HCT116 (cell line): ENCODE measurements at regions of chr2 and their contacts with region 1.

Region 1: DNA sequence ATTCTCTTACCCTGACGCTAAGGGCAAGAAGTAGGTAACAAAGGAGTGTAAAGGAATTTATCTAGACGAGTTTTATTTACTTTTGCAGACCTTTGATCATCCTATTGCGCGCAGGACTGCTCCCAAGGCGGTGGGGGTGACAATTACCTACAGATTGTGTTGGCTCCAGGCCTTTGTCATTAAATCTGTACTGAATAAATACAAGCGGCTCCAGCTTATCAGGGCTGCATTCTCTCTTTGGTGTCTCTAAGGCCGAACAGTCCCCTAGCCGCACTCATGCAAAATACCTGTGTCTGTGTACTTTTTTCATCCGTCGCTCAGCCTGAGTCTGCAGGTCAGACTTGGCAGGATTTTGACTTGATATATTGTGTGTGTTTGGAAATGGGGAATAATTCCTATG is 57.9 kb upstream of the DYSF start:
- DNase-seq: no peak
- ATAC-seq: no peak
- H3K4me3 ChIP-seq: no peak overlapping the region
- H3K27ac ChIP-seq: no peak overlapping the region
- H3K4me1 ChIP-seq: no peaks in the 10 kb centered on the region
- H3K27me3 ChIP-seq: no peaks in the 10 kb centered on the region
- CTCF ChIP-seq: no peak
- POLR2A ChIP-seq: no peak
- RAD21 ChIP-seq: no peak

Region 2: DNA sequence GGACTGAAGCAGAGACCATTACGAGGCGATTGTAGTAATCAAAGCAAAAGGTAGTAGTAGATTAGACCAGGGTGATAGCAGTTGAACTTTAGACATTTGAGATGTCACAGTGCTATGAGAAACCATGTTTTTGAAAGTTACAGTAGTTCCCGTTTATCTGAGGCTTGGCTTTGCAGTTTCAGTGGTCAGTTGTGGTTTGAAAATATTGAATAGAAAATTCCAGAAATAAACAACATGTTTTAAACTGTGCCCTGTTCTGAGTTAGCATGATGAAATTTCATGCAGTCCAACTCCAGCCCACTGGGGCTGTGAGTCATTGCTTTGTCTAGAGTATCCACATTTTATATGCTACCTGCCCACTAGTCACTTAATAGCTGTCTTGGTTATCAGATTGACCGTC is 16.4 kb before region 1 on chr2:
- CTCF ChIA-PET with region 1: no interaction called
- POLR2A ChIA-PET with region 1: no interaction called
- RAD21 ChIA-PET with region 1: no interaction called
- intact Hi-C with region 1: loop called (anchors 1 kb)
- DNase-seq: peak; percentile 18
- ATAC-seq: peak; percentile 67; the same call in 1 of the 2 replicates
- H3K4me3 ChIP-seq: no peak overlapping the region
- H3K27ac ChIP-seq: no peak overlapping the region
- H3K4me1 ChIP-seq: no peaks in the 10 kb centered on the region
- H3K27me3 ChIP-seq: no peaks in the 10 kb centered on the region
- CTCF ChIP-seq: no peak
- POLR2A ChIP-seq: no peak
- RAD21 ChIP-seq: no peak